GM12878 (cell line): ENCODE measurements at regions of chr16 and their contacts with region 1.

Region 1: GRCh38 chr16:3129137-3130131 is 5.4 kb upstream of the ZNF213 start:
- DNase-seq: no peak
- ATAC-seq: peak; percentile 83
- H3K4me3 ChIP-seq: peak overlapping the region; percentile 70
- H3K27ac ChIP-seq: peak overlapping the region; percentile 69
- H3K4me1 ChIP-seq: peaks cover 10% of the 10 kb centered on the region
- H3K27me3 ChIP-seq: no peaks in the 10 kb centered on the region
- CTCF ChIP-seq: peak; percentile 91 to 95 (median 94)
- EP300 ChIP-seq: no peak
- POLR2A ChIP-seq: peak; percentile 72
- RAD21 ChIP-seq: peak; percentile 83

Region 2: DNA sequence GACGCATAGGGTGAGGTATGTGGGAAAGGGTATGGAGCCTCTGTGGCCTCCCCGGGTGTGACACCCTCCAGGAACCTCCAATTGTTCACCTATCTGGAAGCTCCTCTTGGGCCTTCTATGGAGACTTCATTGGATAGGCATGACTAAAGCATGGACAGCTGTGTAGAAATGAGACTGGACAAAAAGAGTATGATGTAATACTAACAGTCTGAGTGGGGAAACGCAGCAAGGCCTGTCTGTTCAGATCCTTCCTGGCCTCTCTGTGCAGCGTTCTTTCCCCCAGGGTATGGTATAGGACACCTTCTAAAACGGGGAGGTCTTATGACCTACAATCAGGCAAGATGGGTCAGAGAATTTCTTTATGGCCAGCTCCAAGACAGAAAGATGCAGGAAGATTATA is 730.9 kb before region 1 on chr16:
- CTCF ChIA-PET with region 1: no interaction called
- POLR2A ChIA-PET with region 1: no interaction called
- RAD21 ChIA-PET with region 1: no interaction called
- SMC1A ChIA-PET with region 1: no interaction called
- in situ Hi-C with region 1: no loop called
- intact Hi-C with region 1: no loop called
- DNase-seq: no peak
- ATAC-seq: no peak
- H3K4me3 ChIP-seq: no peak overlapping the region
- H3K27ac ChIP-seq: no peak overlapping the region
- H3K4me1 ChIP-seq: no peaks in the 10 kb centered on the region
- H3K27me3 ChIP-seq: no peaks in the 10 kb centered on the region
- CTCF ChIP-seq: no peak
- EP300 ChIP-seq: no peak
- POLR2A ChIP-seq: no peak
- RAD21 ChIP-seq: no peak

Region 3: DNA sequence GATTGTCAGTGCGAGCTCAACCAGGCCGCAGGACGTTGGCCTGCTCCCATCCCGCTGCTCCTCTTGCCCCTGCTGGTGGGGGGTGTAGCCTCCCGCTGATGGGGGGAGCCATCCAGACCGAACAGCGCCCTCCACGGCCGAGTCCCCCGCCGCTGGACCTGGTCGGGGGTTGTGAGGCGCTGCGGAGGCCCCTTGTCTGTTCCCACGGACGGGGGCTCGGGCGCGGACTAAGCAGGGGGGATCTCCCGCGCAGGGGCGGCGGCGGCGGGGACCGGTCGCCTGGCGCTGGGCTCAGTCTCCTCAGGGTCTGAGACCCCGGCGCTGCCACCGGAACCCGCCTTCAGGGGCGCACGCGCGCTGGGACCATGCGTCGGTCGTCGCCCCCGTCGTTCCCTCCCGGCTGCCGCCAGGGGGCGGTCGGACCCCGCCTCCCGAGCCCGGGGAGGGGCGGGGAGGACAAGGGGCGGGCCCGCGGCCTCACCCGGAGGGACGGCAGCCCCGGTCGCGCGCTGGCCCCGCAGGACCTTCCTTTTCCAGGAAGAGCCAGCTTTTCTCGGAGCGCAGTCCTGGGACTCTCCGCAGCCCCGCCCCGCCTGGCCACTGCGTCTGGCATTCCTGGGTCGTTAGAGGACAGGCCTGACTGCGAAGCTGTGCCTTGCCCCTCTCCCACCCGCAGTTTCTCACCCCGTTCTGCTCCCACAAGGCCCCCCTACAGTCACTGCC is 70.3 kb before region 1 on chr16:
- CTCF ChIA-PET with region 1: interaction called, 174 read pairs
- POLR2A ChIA-PET with region 1: interaction called, 12 read pairs
- RAD21 ChIA-PET with region 1: interaction called, 72 read pairs
- SMC1A ChIA-PET with region 1: interaction called, 53 read pairs
- in situ Hi-C with region 1: loop called (anchors 5 kb)
- intact Hi-C with region 1: loop called (anchors 1 kb)
- DNase-seq: no peak
- ATAC-seq: peak; percentile 97
- H3K4me3 ChIP-seq: peak overlapping the region; percentile 87
- H3K27ac ChIP-seq: peak overlapping the region; percentile 70
- H3K4me1 ChIP-seq: peaks cover 16% of the 10 kb centered on the region
- H3K27me3 ChIP-seq: no peaks in the 10 kb centered on the region
- CTCF ChIP-seq: peak; percentile 71 to 94 (median 85)
- EP300 ChIP-seq: no peak
- POLR2A ChIP-seq: peak; percentile 71
- RAD21 ChIP-seq: peak; percentile 93

Region 4: DNA sequence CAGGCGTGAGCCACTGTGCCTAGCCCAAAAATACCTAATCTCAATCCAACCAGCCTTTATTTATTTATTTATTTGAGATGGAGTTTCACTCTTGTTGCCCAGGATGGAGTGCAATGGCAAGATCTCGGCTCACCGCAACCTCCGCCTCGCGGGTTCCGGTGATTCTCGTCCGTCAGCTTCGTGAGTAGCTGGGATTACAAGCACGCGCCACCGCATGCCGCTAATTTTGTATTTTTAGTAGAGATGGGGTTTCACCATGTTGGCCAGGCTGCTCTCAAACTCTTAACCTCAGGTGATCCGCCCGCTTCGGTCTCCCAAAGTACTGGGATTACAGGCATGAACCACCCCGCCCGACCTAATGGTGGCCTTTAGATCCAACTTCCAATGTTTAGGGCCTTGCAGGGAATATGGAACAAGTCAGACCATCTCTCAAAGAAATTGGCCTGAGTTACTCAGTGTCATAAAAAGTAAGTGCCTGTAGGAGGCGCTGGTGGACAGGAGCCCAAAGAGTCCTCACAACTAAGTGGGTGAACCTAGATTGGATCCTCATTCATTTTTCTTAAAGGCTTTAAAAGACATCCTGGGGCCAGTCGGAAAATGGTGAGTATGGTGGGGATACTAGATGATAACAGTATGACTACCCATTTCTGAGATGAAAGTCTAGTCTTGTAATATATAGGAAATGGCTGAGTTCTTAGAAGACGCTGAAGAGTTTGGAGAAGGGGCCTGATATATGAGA is 35.0 kb before region 1 on chr16:
- CTCF ChIA-PET with region 1: interaction called, 396 read pairs
- POLR2A ChIA-PET with region 1: interaction called, 10 read pairs
- RAD21 ChIA-PET with region 1: interaction called, 55 read pairs
- SMC1A ChIA-PET with region 1: interaction called, 67 read pairs
- in situ Hi-C with region 1: no loop called
- intact Hi-C with region 1: loop called (anchors 2 kb)
- DNase-seq: no peak
- ATAC-seq: peak; percentile 72
- H3K4me3 ChIP-seq: no peak overlapping the region
- H3K27ac ChIP-seq: no peak overlapping the region
- H3K4me1 ChIP-seq: peaks cover 6% of the 10 kb centered on the region; the same call in 1 of the 2 replicates
- H3K27me3 ChIP-seq: no peaks in the 10 kb centered on the region
- CTCF ChIP-seq: peak; percentile 64 to 75 (median 68)
- EP300 ChIP-seq: no peak
- POLR2A ChIP-seq: no peak
- RAD21 ChIP-seq: peak; percentile 63

Region 5: GRCh38 chr16:3112058-3112880 is 17.2 kb before region 1 on chr16 and contains the start of gene ZNF205:
- CTCF ChIA-PET with region 1: interaction called, 396 read pairs
- POLR2A ChIA-PET with region 1: interaction called, 5 read pairs
- RAD21 ChIA-PET with region 1: interaction called, 7 read pairs
- SMC1A ChIA-PET with region 1: interaction called, 11 read pairs
- in situ Hi-C with region 1: no loop called
- intact Hi-C with region 1: no loop called
- DNase-seq: no peak
- ATAC-seq: peak; percentile 44
- H3K4me3 ChIP-seq: peak within 1 kb of the TSS; percentile 55
- H3K27ac ChIP-seq: no peak within 1 kb of the TSS; the same call in 1 of the 2 replicates
- H3K4me1 ChIP-seq: no peaks in the 10 kb centered on the region; the same call in 1 of the 2 replicates
- H3K27me3 ChIP-seq: no peaks in the 10 kb centered on the region; a peak in 1 of 4 replicates
- CTCF ChIP-seq: no peak
- EP300 ChIP-seq: no peak
- POLR2A ChIP-seq: no peak
- RAD21 ChIP-seq: no peak
- polyA plus RNA-seq, gene ZNF205: not detected

Region 6: DNA sequence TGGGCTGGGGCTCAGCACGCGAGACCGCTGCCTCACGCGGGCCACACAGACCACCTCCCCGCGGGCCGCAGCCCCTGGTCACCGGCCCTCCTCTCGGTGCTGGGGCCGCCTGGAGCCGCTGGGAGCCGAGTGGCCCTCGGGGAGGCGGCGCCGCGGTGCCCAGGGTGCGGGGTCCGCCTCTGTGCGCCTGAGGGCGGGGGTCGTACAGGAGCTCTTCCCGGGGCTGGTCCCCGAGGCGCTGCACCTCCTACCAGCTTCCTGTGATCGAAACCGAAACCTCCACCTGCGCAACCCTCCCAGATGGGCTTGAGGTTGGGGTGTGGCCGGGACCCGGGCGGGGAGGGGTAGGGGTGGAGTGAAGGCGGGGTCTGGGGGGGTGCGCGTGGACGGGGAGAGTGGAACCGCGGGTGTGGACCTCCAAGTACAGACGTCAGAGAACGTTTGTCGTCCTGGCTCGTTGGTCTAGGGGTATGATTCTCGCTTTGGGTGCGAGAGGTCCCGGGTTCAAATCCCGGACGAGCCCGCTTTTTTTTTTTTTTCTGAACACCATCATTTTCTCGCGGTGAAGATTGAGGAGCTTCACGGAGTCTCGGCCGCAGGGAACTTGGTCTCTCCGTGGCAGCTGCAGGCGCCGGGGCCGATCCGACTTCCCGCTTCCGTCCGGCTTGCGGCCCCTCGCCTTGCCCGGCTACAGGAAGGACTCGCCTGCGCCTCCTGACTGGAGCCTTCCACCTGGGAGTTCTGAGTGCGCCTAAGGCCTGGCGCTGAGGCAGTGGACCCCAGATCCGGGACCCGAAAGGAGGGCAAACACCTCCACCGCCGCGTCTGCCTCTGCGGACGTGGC is 29.3 kb after region 1 on chr16:
- CTCF ChIA-PET with region 1: interaction called, 18 read pairs
- POLR2A ChIA-PET with region 1: interaction called, 8 read pairs
- RAD21 ChIA-PET with region 1: interaction called, 5 read pairs
- SMC1A ChIA-PET with region 1: interaction called, 4 read pairs
- in situ Hi-C with region 1: no loop called
- intact Hi-C with region 1: no loop called
- DNase-seq: no peak
- ATAC-seq: peak; percentile 88
- H3K4me3 ChIP-seq: peak overlapping the region; percentile 96
- H3K27ac ChIP-seq: peak overlapping the region; percentile 41
- H3K4me1 ChIP-seq: peaks cover 17% of the 10 kb centered on the region
- H3K27me3 ChIP-seq: peaks cover 0 to 2% of the 10 kb centered on the region in 2 experiments; a peak in 1 of 4 replicates
- CTCF ChIP-seq: no peak
- EP300 ChIP-seq: no peak
- POLR2A ChIP-seq: peak; percentile 67; the same call in 1 of the 2 replicates
- RAD21 ChIP-seq: no peak